HAP-1 (cell line): ENCODE measurements at regions of chr2 and their contacts with region 1.

Region 1: GRCh38 chr2:11583840-11584524 is 50.1 kb downstream of the GREB1 start:
- DNase-seq: peak; percentile 58 to 83
- H3K4me3 ChIP-seq: no peak overlapping the region
- H3K4me1 ChIP-seq: no peaks in the 10 kb centered on the region
- H3K27me3 ChIP-seq: peaks cover 2% of the 10 kb centered on the region; the same call in 1 of the 2 replicates

Region 2: DNA sequence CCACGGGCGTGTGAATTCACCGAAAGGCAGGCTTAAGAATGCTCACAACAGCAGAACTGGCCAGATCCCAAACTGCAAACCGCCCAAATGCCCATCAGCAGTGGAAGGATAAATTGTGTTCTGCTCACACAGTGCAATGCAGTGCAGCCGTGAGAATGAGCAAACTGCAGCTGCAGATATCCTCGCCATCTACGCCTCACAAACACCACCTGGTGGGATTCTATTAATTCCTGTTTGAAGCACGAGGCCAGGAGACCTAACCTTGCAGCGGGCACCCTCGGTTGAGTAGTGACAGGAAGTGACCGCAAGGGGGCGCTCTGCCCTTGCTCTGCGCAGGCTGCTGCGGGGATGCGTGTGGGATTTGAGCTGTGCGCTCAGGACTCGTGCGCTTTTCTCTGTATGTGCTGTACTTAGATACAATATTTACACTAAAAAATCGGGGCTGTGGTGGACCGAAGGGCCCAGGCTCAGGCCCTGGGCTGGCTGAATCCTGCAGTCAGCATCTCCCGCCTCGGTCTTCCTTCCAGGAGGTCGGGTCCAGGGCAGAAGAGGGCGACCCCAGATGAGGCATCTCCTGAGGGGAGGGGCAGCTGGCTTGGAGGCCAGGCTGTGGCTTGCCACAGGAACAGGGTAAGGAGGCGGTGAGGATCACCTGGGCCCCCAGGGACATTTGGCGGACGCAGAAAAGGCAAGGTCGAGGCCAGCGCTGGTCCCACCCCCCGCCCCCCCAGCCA is 751.6 kb before region 1 on chr2:
- in situ Hi-C with region 1: loop called (anchors 25 kb)
- DNase-seq: peak; percentile 82 to 88
- H3K4me3 ChIP-seq: no peak overlapping the region
- H3K4me1 ChIP-seq: peaks cover 6% of the 10 kb centered on the region
- H3K27me3 ChIP-seq: peaks cover 34% of the 10 kb centered on the region

Region 3: GRCh38 chr2:11129598-11130449 is 454.2 kb before region 1 on chr2:
- in situ Hi-C with region 1: loop called (anchors 10 kb)
- DNase-seq: peak; percentile 72 to 92
- H3K4me3 ChIP-seq: peak overlapping the region; percentile 19
- H3K4me1 ChIP-seq: peaks cover 7% of the 10 kb centered on the region
- H3K27me3 ChIP-seq: no peaks in the 10 kb centered on the region

Region 4: DNA sequence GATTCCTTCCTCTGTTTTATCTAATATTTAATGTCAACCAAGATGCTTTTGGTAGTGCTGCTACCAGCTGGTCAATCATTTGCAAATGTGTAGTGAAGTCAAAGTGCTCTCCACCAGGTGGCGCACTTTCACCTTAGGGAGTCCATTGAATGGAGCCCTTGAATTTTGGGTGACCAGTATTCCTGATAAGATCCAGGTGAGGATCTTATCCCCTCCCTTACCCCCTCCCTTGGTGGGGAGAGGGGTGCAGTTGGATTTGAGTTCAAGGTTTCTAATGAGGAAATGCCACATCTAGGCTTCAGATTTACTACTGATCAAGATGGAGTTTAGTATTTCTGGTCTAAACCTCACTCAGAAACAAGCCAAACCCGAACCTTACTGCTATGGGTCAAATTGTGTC is 106.0 kb before region 1 on chr2:
- in situ Hi-C with region 1: loop called (anchors 5 kb)
- DNase-seq: peak; percentile 65 to 94
- H3K4me3 ChIP-seq: no peak overlapping the region
- H3K4me1 ChIP-seq: no peaks in the 10 kb centered on the region
- H3K27me3 ChIP-seq: peaks cover 8% of the 10 kb centered on the region

Region 5: GRCh38 chr2:12005886-12006681 is 422.1 kb after region 1 on chr2:
- in situ Hi-C with region 1: no loop called
- DNase-seq: peak in 1 of 2 experiments; percentile 27
- H3K4me3 ChIP-seq: no peak overlapping the region
- H3K4me1 ChIP-seq: peaks cover 20% of the 10 kb centered on the region
- H3K27me3 ChIP-seq: no peaks in the 10 kb centered on the region